Activated B cell treated with CpG ODN at 0.5 μM for 24 hours (primary cell): ENCODE measurements at regions of chr10 and their contacts with region 1.

Region 1: DNA sequence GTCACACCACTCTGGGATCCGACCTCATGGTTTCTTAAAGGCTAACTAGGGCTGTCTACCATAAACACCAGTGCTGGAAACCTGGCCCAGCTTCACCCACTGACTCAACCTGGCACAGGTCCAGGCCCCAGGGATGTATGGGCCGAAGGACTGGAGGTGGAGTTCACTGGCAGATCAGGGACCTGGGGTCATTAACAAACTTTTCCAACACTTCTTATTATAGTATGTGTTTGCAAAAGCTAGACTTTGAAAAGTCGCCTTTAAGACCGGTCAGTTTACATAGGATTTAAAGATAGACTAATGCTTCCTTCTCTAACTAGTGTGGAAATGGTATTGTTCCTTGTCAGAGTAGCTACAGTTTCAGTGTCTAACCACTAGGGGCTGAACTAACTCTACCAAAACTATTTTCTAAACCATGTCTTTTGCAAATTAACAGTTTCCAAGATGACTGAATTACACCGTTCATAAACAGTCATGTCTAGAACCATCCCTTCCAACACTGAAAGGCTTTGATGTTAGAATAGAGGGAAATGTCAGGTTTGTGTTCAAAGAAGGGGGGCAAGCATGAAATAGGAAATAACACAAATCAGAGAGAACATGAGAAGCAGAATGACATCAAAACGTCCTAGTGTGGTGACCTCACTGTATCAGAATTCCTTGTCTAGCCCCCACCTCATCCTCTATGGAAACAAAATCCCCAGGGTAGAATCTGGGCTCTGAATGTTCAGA is 29.7 kb downstream of the STN1 start:
- DNase-seq: no peak
- ATAC-seq: peak; percentile 77
- H3K4me3 Mint-ChIP-seq: no peak overlapping the region
- H3K27ac Mint-ChIP-seq: no peak overlapping the region
- H3K4me1 Mint-ChIP-seq: peaks cover 2% of the 10 kb centered on the region
- H3K27me3 Mint-ChIP-seq: no peaks in the 10 kb centered on the region
- CTCF ChIP-seq: peak; percentile 67

Region 2: DNA sequence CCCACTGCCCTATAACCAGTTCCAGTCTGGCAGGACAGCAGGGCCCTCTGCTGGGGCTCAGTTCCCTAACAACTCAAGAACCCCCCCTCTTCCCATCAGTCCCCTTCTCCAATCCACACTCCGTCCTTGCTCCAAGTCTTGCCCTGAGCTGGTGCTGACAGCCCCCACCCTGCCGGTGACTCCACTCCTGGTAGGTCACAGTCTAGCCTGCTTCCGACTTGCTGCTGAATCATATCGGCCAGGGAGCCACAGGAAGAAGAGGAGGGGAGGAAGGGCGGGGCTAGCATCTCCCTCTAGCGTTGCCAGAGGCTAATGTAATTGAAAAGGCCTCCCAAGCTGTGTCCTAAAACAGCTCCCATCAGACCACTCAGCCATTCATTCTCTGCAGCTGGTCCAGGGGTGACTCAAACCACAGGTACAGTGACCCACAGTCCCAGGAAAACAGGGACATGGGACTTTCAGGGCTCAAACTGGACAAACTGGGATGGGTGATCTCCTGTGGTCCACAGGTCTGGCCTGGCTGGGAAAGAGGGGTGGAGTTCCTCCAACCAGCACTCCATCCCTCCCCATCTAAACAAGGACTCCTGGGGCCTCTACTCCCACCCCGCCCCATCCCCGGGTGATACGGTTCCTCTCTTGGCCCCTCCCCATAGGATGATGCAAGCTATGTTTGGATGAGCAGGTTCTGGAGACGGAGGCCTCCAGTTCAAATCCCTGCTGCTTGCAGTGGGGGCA is 191.7 kb before region 1 on chr10:
- CTCF ChIA-PET with region 1: no interaction called
- POLR2A ChIA-PET with region 1: no interaction called
- intact Hi-C with region 1: no loop called
- DNase-seq: peak; percentile 30
- ATAC-seq: no peak
- H3K4me3 Mint-ChIP-seq: peak overlapping the region; percentile 52
- H3K27ac Mint-ChIP-seq: peak overlapping the region; percentile 39
- H3K4me1 Mint-ChIP-seq: peaks cover 38% of the 10 kb centered on the region
- H3K27me3 Mint-ChIP-seq: no peaks in the 10 kb centered on the region
- CTCF ChIP-seq: no peak

Region 3: GRCh38 chr10:103772096-103772845 is 116.0 kb before region 1 on chr10:
- CTCF ChIA-PET with region 1: no interaction called
- POLR2A ChIA-PET with region 1: no interaction called
- intact Hi-C with region 1: no loop called
- DNase-seq: peak; percentile 36
- ATAC-seq: peak; percentile 84
- H3K4me3 Mint-ChIP-seq: peak overlapping the region; percentile 90
- H3K27ac Mint-ChIP-seq: peak overlapping the region; percentile 71
- H3K4me1 Mint-ChIP-seq: peaks cover 47% of the 10 kb centered on the region
- H3K27me3 Mint-ChIP-seq: peaks cover 4% of the 10 kb centered on the region
- CTCF ChIP-seq: no peak

Region 4: GRCh38 chr10:103901299-103901698 is 13.0 kb after region 1 on chr10:
- CTCF ChIA-PET with region 1: interaction called, 10 read pairs
- POLR2A ChIA-PET with region 1: no interaction called
- intact Hi-C with region 1: no loop called
- DNase-seq: no peak
- ATAC-seq: no peak
- H3K4me3 Mint-ChIP-seq: no peak overlapping the region
- H3K27ac Mint-ChIP-seq: no peak overlapping the region
- H3K4me1 Mint-ChIP-seq: no peaks in the 10 kb centered on the region
- H3K27me3 Mint-ChIP-seq: no peaks in the 10 kb centered on the region
- CTCF ChIP-seq: no peak

Region 5: DNA sequence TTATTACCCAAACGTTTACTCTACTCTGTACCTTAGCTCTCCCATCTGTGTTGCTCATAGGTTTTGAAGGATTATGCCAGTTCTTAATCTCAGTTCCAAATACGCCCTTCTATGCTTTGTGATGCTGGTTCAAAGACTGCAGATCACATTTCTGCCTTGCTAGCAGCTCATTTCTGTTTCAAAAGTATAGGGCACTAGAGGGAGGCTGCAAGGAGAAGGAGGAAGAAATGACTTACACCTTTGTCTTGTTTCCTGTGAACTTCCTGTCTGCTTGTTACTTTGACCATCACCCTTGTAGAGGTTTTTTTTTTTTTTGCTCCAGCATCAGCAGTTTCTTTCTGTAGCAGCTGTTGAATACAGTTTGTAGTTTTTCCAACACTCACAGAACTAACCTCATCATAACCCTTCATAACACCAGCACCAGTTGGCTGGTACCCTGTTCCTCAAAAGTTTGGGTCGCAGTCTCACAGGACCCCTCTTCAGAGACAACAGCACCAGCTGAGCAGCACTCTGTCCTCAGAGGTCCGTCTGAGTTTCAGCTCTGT is 95.2 kb after region 1 on chr10:
- CTCF ChIA-PET with region 1: interaction called, 4 read pairs
- POLR2A ChIA-PET with region 1: no interaction called
- intact Hi-C with region 1: loop called (anchors 1 kb)
- DNase-seq: no peak
- ATAC-seq: peak; percentile 66
- H3K4me3 Mint-ChIP-seq: peak overlapping the region; percentile 41
- H3K27ac Mint-ChIP-seq: peak overlapping the region; percentile 74
- H3K4me1 Mint-ChIP-seq: peaks cover 50% of the 10 kb centered on the region
- H3K27me3 Mint-ChIP-seq: no peaks in the 10 kb centered on the region
- CTCF ChIP-seq: no peak

Region 6: GRCh38 chr10:104045151-104046089 is 157.1 kb after region 1 on chr10:
- CTCF ChIA-PET with region 1: no interaction called
- POLR2A ChIA-PET with region 1: no interaction called
- intact Hi-C with region 1: no loop called
- DNase-seq: no peak
- ATAC-seq: no peak
- H3K4me3 Mint-ChIP-seq: no peak overlapping the region
- H3K27ac Mint-ChIP-seq: no peak overlapping the region
- H3K4me1 Mint-ChIP-seq: no peaks in the 10 kb centered on the region
- H3K27me3 Mint-ChIP-seq: peaks cover 8% of the 10 kb centered on the region
- CTCF ChIP-seq: no peak

Region 7: GRCh38 chr10:104139221-104139620 is 250.9 kb after region 1 on chr10:
- CTCF ChIA-PET with region 1: interaction called, 4 read pairs
- POLR2A ChIA-PET with region 1: no interaction called
- intact Hi-C with region 1: loop called (anchors 1 kb)
- DNase-seq: no peak
- ATAC-seq: no peak
- H3K4me3 Mint-ChIP-seq: no peak overlapping the region
- H3K27ac Mint-ChIP-seq: no peak overlapping the region
- H3K4me1 Mint-ChIP-seq: peaks cover 7% of the 10 kb centered on the region
- H3K27me3 Mint-ChIP-seq: peaks cover 12% of the 10 kb centered on the region
- CTCF ChIP-seq: no peak

Region 8: DNA sequence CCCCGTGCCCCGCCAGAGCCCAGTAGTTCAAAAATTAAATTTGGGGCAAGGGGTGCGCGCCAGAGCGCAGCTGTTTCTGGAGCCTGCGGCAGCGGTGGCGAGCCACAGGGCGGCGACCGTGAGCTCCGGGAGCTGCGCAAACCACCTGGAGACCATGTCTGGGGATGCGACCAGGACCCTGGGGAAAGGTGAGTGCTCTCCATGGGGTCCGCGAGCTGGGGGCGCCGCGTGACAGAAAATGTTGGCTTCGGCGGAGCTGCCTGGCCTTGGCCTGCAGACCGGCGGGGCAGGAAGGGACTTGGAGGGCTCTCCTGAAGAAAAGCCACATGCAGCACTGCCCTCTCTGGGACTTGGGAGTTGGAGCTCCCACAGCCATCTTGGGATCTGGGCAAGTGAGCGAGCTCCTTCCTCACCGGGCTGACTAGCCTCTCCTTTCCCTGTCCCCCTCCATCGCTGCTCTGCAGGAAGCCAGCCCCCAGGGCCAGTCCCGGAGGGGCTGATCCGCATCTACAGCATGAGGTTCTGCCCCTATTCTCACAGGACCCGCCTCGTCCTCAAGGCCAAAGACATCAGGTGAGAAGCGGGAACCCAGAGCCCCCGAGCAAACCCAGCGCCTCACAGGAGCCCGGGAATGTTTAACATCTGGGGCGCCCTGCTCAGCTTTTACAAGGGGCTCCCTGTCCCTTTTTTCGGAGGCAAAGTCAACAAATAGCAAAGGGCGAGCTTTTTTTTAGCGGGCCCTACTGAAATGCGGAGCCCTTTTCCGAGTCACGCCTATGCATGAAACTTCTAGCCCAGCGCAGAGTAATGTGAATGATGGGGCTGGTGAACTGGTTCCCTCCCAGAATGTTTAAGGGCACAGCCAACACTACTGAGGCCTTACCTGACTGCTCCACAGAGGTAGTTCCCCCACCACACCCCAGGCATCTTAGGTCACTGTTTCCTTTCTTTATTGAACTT is 386.8 kb after region 1 on chr10:
- CTCF ChIA-PET with region 1: interaction called, 14 read pairs
- POLR2A ChIA-PET with region 1: no interaction called
- intact Hi-C with region 1: no loop called
- DNase-seq: peak; percentile 36
- ATAC-seq: peak; percentile 83
- H3K4me3 Mint-ChIP-seq: no peak overlapping the region
- H3K27ac Mint-ChIP-seq: no peak overlapping the region
- H3K4me1 Mint-ChIP-seq: peaks cover 6% of the 10 kb centered on the region
- H3K27me3 Mint-ChIP-seq: peaks cover 5% of the 10 kb centered on the region
- CTCF ChIP-seq: no peak